Heart right ventricle (tissue), 16 donors: ENCODE measurements at regions of chr1 and their contacts with region 1.

Region 1: DNA sequence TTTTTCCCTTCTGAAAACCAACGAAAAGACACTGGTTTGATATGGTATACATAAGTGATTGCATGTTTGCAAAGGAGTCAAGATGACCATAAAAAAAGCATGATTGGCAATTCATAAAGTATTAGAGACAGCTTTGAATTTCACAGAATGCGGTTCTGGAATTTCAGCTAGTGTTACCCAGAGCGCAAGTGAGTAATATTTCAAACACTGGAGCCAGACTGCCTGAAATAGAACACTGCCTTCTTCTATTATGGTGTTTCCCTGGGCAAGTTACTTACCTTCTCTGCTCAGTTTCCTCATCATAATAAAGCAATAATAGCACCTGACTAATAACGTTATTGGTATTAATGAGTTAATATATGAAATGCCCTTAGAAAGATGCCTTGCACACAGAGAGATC is 54.7 kb downstream of the NEGR1 start:
- DNase-seq: no peak
- ATAC-seq: no peak
- H3K4me3 ChIP-seq: no peak overlapping the region
- H3K27ac ChIP-seq: no peak overlapping the region
- H3K4me1 ChIP-seq: no peaks in the 10 kb centered on the region
- H3K27me3 ChIP-seq: no peaks in the 10 kb centered on the region
- CTCF ChIP-seq: no peak

Region 2: DNA sequence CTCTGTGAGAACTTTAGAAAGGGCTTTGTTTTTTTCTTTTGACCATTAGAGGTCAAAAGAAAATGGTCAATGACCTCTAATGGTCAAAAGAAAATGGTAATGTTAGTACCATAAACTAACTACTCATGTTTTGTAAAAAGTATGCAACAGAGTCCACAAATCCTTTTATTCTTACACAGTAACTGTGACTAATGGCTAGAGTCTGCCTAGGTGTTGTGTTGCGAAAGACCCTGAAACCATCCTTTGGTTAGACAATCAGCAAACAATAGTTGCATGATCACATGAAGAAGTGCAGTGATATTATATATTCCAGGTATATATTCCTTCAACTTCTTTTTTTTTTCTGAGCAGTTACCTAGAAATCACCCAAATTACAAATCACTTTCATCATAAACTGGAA is 13.7 kb after region 1 on chr1:
- intact Hi-C with region 1: loop called in 1 of 10 experiments (anchors 1 kb)
- DNase-seq: no peak
- ATAC-seq: no peak
- H3K4me3 ChIP-seq: no peak overlapping the region
- H3K27ac ChIP-seq: no peak overlapping the region
- H3K4me1 ChIP-seq: no peaks in the 10 kb centered on the region
- H3K27me3 ChIP-seq: no peaks in the 10 kb centered on the region
- CTCF ChIP-seq: no peak